ENCODE measurements at regions of chr5 and their contacts with region 1.

Region 1: GRCh38 chr5:60835554-60835953 is 8.5 kb downstream of the ELOVL7 start:
- DNase-seq: no peak
- ATAC-seq: no peak
- H3K4me3 ChIP-seq: no peak overlapping the region
- H3K27ac ChIP-seq: no peak overlapping the region
- H3K4me1 ChIP-seq: no peaks in the 10 kb centered on the region
- H3K27me3 ChIP-seq: 0 out of 2 replicates have a peak, but pooled peaks cover under 1% of the 10 kb centered on the region
- CTCF ChIP-seq: no peak

Region 2: GRCh38 chr5:60660038-60660437 is 175.5 kb before region 1 on chr5:
- CTCF ChIA-PET with region 1: interaction called, 12 read pairs
- POLR2A ChIA-PET with region 1: no interaction called
- in situ Hi-C with region 1: no loop called
- intact Hi-C with region 1: no loop called
- DNase-seq: no peak
- ATAC-seq: no peak
- H3K4me3 ChIP-seq: no peak overlapping the region
- H3K27ac ChIP-seq: no peak overlapping the region
- H3K4me1 ChIP-seq: no peaks in the 10 kb centered on the region
- H3K27me3 ChIP-seq: no peaks in the 10 kb centered on the region
- CTCF ChIP-seq: no peak